CD4-positive, alpha-beta T cell (primary cell): ENCODE measurements at regions of chr7 and their contacts with region 1.

Region 1: GRCh38 chr7:32490127-32490822 is at the start of gene LSM5:
- DNase-seq: peak; percentile 80 to 96 (median 85)
- ATAC-seq: peak; percentile 67
- H3K4me3 ChIP-seq: peak within 1 kb of the TSS; percentile 68
- H3K4me3 Mint-ChIP-seq: peak within 1 kb of the TSS; percentile 92
- H3K27ac ChIP-seq: peak within 1 kb of the TSS; percentile 83 to 84
- H3K27ac Mint-ChIP-seq: peak within 1 kb of the TSS; percentile 92
- H3K4me1 ChIP-seq: peaks cover 16% of the 10 kb centered on the region
- H3K4me1 Mint-ChIP-seq: peaks cover 42% of the 10 kb centered on the region
- H3K27me3 ChIP-seq: no peaks in the 10 kb centered on the region
- H3K27me3 Mint-ChIP-seq: no peaks in the 10 kb centered on the region
- CTCF ChIP-seq: no peak
- total RNA-seq, gene LSM5: 28.2 to 28.7 TPM

Region 2: GRCh38 chr7:32275216-32275979 is 214.9 kb before region 1 on chr7:
- CTCF ChIA-PET with region 1: no interaction called
- POLR2A ChIA-PET with region 1: no interaction called
- intact Hi-C with region 1: no loop called
- DNase-seq: peak in 1 of 14 experiments; percentile 7
- ATAC-seq: no peak
- H3K4me3 ChIP-seq: no peak overlapping the region
- H3K4me3 Mint-ChIP-seq: no peak overlapping the region
- H3K27ac ChIP-seq: no peak overlapping the region
- H3K27ac Mint-ChIP-seq: no peak overlapping the region
- H3K4me1 ChIP-seq: no peaks in the 10 kb centered on the region
- H3K4me1 Mint-ChIP-seq: no peaks in the 10 kb centered on the region
- H3K27me3 ChIP-seq: no peaks in the 10 kb centered on the region
- H3K27me3 Mint-ChIP-seq: no peaks in the 10 kb centered on the region
- CTCF ChIP-seq: no peak

Region 3: DNA sequence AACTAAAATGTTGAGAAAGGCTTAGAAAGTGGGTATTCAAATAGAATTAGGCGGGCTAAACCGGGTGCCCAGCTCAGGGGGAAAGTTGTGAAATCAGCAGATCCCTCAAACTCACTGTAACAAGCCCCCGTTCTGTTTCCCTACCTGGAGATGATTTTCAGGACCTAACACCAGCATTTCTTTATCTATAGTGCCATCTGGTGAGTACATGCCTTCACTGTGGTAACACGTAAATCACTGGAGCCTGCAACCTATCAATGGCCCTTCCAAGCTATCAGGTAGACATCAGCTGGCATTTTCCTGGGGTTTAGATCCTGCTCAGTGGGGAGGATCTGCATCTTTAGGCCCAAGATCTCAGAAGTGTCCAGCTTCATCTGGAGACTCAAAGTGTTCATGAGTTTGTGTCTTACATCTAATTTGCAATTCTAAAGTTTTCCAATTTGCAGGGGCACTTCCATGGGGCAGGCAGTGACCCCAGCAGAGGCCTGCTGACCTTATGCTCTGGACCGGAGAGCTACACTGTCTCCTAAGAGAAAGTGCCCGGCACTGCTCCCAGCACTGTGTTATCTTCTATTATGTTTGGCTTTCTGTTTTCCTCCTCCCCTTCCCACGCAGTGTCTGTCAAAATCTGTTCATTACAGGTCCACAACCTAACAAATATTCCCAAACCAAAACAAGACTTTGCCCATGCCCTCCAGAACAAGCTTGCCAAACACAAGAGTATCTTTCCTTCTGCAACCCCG is 132.6 kb before region 1 on chr7:
- CTCF ChIA-PET with region 1: no interaction called
- POLR2A ChIA-PET with region 1: no interaction called
- intact Hi-C with region 1: no loop called
- DNase-seq: no peak
- ATAC-seq: no peak
- H3K4me3 ChIP-seq: no peak overlapping the region
- H3K4me3 Mint-ChIP-seq: no peak overlapping the region
- H3K27ac ChIP-seq: no peak overlapping the region
- H3K27ac Mint-ChIP-seq: no peak overlapping the region
- H3K4me1 ChIP-seq: no peaks in the 10 kb centered on the region
- H3K4me1 Mint-ChIP-seq: no peaks in the 10 kb centered on the region
- H3K27me3 ChIP-seq: no peaks in the 10 kb centered on the region
- H3K27me3 Mint-ChIP-seq: peaks cover 27% of the 10 kb centered on the region
- CTCF ChIP-seq: no peak

Region 4: DNA sequence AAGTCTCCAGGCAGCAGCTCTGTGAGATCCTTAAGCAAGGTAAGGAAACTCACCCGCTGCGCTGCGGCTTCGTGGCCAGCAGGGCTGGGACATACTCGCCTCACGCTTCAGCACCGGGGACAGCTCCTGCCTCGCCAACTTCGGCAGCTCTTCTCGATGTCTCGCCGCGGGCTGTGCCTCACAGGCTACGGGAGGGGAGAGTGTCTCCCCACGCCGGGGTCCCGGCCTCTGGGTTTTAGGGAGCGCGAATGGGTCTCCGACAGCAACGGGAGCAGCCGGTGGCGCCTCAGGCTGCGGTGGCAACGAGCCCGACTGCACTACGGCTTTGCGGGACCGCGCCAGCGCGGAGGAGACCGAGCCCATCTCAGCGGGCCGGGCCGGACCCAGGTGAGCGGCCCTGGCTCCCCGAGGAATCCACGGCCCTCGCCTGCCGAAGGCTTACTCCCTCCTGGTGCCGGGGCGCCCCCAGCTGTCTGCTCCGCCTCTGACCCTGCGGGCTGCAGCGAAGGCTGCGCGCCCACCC is 62.4 kb before region 1 on chr7:
- CTCF ChIA-PET with region 1: no interaction called
- POLR2A ChIA-PET with region 1: no interaction called
- intact Hi-C with region 1: no loop called
- DNase-seq: peak; percentile 16 to 69 (median 42)
- ATAC-seq: peak; percentile 60
- H3K4me3 ChIP-seq: no peak overlapping the region
- H3K4me3 Mint-ChIP-seq: no peak overlapping the region
- H3K27ac ChIP-seq: no peak overlapping the region
- H3K27ac Mint-ChIP-seq: no peak overlapping the region
- H3K4me1 ChIP-seq: no peaks in the 10 kb centered on the region
- H3K4me1 Mint-ChIP-seq: no peaks in the 10 kb centered on the region
- H3K27me3 ChIP-seq: peaks cover 44 to 52% of the 10 kb centered on the region in 2 experiments
- H3K27me3 Mint-ChIP-seq: peaks cover 67% of the 10 kb centered on the region
- CTCF ChIP-seq: no peak

Region 5: DNA sequence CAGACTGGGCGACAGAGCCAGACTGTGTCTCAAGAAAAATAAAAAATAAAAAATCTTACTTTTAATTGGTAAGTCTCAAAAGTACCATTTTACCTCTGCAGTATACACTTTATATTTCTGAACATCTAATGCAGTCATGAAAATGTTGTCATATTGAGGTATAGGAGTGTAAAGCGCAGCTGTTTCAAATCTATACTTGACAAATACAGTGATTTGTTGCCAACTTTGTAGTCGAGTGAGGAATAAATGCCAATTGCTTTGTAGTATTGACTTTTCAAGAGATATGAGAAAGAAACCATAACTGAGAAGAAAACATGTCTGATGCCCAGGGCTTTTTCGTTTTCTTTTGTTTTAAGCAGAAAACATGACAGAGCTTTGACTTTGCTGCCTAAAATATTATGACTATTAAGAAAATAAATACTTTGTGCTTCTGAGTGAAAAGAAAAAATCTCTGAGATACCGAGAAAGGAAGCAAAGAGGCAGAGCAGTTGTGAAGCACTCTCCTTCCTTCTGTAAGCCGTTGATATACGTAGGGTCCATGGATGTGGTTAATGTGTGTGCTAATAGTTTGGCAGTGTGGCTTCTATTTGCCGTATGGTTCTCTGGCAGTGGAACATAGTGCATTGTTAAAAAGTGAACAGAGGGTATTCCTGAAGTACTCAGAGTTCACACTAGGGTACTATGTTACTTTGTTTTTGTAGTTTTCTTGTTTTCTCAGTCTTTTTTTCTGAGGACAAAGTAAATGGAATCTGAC is 43.2 kb after region 1 on chr7:
- CTCF ChIA-PET with region 1: no interaction called
- POLR2A ChIA-PET with region 1: interaction called, 7 read pairs
- intact Hi-C with region 1: loop called in 1 of 2 experiments (anchors 5 kb)
- DNase-seq: peak in 1 of 14 experiments; percentile 5
- ATAC-seq: no peak
- H3K4me3 ChIP-seq: no peak overlapping the region
- H3K4me3 Mint-ChIP-seq: no peak overlapping the region
- H3K27ac ChIP-seq: no peak overlapping the region
- H3K27ac Mint-ChIP-seq: peak overlapping the region; percentile 72
- H3K4me1 ChIP-seq: no peaks in the 10 kb centered on the region
- H3K4me1 Mint-ChIP-seq: peaks cover 41% of the 10 kb centered on the region
- H3K27me3 ChIP-seq: no peaks in the 10 kb centered on the region
- H3K27me3 Mint-ChIP-seq: no peaks in the 10 kb centered on the region
- CTCF ChIP-seq: no peak

Region 6: DNA sequence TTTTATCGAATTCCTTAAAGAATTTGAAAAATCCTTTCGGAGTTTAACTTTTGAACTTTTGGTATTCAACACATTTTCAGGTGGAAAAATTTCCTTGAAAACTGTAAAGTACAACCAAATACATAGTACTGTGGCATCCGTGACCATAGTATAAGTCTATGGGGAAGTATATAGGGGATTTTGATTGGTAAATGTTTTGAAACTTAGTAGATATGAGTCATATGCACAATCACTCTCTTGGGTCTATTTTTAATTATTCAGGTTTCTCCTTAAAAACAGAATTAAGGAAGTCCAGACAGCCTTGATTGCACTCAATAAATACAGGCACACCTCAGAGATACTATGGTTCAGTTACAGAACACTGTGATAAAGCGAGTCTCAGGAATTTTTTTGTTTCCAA is 69.2 kb after region 1 on chr7:
- CTCF ChIA-PET with region 1: no interaction called
- POLR2A ChIA-PET with region 1: interaction called, 5 read pairs
- intact Hi-C with region 1: loop called (anchors 5 kb)
- DNase-seq: no peak
- ATAC-seq: no peak
- H3K4me3 ChIP-seq: no peak overlapping the region
- H3K4me3 Mint-ChIP-seq: no peak overlapping the region
- H3K27ac ChIP-seq: no peak overlapping the region
- H3K27ac Mint-ChIP-seq: no peak overlapping the region
- H3K4me1 ChIP-seq: no peaks in the 10 kb centered on the region
- H3K4me1 Mint-ChIP-seq: peaks cover 5% of the 10 kb centered on the region
- H3K27me3 ChIP-seq: no peaks in the 10 kb centered on the region
- H3K27me3 Mint-ChIP-seq: no peaks in the 10 kb centered on the region
- CTCF ChIP-seq: no peak

Region 7: DNA sequence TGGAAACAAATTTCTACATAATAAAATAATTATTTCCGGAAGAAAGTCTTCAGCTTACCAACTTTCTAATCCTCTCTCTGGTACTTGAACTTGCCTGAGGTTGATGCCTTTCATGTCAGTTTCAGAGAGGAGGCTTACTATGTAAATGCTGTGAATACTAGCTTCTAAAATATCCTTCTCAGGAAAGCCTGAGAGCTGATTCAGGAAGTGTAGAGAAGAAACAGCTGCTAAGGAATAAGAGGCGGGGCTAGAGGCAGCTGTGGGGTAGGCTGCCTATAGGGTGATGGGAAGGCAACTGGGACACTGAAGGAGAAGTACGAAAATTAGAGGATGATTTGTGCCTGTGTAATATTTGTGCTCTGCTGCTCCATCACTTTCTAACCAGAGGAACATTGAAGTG is 74.3 kb after region 1 on chr7:
- CTCF ChIA-PET with region 1: no interaction called
- POLR2A ChIA-PET with region 1: interaction called, 3 read pairs
- intact Hi-C with region 1: loop called (anchors 5 kb)
- DNase-seq: no peak
- ATAC-seq: no peak
- H3K4me3 ChIP-seq: no peak overlapping the region
- H3K4me3 Mint-ChIP-seq: no peak overlapping the region
- H3K27ac ChIP-seq: no peak overlapping the region
- H3K27ac Mint-ChIP-seq: no peak overlapping the region
- H3K4me1 ChIP-seq: no peaks in the 10 kb centered on the region
- H3K4me1 Mint-ChIP-seq: peaks cover 5% of the 10 kb centered on the region
- H3K27me3 ChIP-seq: no peaks in the 10 kb centered on the region
- H3K27me3 Mint-ChIP-seq: no peaks in the 10 kb centered on the region
- CTCF ChIP-seq: no peak

Region 8: GRCh38 chr7:33062782-33063443 is 572.6 kb after region 1 on chr7:
- CTCF ChIA-PET with region 1: no interaction called
- POLR2A ChIA-PET with region 1: interaction called, 6 read pairs
- intact Hi-C with region 1: loop called in 1 of 2 experiments (anchors 5 kb)
- DNase-seq: peak; percentile 83 to 98 (median 90)
- ATAC-seq: peak; percentile 90
- H3K4me3 ChIP-seq: peak overlapping the region; percentile 72
- H3K4me3 Mint-ChIP-seq: peak overlapping the region; percentile 98
- H3K27ac ChIP-seq: peak overlapping the region; percentile 75 to 89
- H3K27ac Mint-ChIP-seq: peak overlapping the region; percentile 95
- H3K4me1 ChIP-seq: peaks cover 25% of the 10 kb centered on the region
- H3K4me1 Mint-ChIP-seq: peaks cover 48% of the 10 kb centered on the region
- H3K27me3 ChIP-seq: no peaks in the 10 kb centered on the region
- H3K27me3 Mint-ChIP-seq: no peaks in the 10 kb centered on the region
- CTCF ChIP-seq: no peak

Region 9: DNA sequence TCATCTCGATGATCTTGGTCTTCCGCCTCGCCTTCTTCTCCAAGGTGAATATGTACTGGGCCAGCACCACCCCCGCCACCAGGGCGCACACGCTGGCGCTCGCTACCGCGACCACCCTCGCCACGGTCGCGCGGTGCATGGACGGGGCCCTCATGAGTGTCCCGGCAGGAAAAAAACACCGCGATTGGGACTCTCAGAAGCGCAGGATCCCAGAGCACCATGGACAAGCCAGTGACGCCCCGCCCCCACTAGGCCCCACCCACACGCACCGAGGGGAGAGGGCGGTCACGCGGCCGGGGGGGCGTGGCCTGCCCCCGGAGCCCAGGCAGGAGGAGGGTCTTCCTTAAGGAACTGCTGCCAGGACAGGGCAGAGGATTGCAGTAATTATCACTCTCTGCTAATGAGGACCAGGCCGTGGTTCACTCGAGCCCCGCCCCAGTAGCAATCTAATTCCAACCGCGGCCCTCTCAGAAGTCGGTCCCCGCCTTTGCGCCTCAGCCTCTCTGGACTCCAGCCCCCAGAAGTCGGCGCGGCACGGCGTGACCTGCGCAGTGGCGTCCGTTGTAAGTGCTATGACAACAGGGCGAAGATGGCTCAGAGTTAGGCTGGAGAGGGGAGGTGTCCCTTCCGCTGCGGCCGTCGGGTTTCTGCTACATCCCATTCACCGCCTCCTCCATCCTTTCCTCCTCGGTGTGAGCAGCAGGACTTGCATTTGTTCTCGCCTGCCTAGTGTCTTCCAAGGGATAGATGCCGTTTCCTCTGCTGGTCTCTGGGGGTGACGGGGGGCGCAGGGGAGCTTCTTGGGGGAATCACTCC is 638.9 kb after region 1 on chr7 and contains the start of gene BBS9:
- CTCF ChIA-PET with region 1: no interaction called
- POLR2A ChIA-PET with region 1: interaction called, 3 read pairs
- intact Hi-C with region 1: loop called (anchors 2 to 5 kb)
- DNase-seq: peak; percentile 79 to 95 (median 87)
- ATAC-seq: peak; percentile 95
- H3K4me3 ChIP-seq: peak within 1 kb of the TSS; percentile 63
- H3K4me3 Mint-ChIP-seq: peak within 1 kb of the TSS; percentile 96
- H3K27ac ChIP-seq: peak within 1 kb of the TSS; percentile 54 to 79
- H3K27ac Mint-ChIP-seq: peak within 1 kb of the TSS; percentile 92
- H3K4me1 ChIP-seq: peaks cover 4% of the 10 kb centered on the region
- H3K4me1 Mint-ChIP-seq: peaks cover 34% of the 10 kb centered on the region
- H3K27me3 ChIP-seq: no peaks in the 10 kb centered on the region
- H3K27me3 Mint-ChIP-seq: peaks cover 4% of the 10 kb centered on the region
- CTCF ChIP-seq: no peak
- total RNA-seq, gene BBS9: 16.0 to 20.4 TPM

Region 10: DNA sequence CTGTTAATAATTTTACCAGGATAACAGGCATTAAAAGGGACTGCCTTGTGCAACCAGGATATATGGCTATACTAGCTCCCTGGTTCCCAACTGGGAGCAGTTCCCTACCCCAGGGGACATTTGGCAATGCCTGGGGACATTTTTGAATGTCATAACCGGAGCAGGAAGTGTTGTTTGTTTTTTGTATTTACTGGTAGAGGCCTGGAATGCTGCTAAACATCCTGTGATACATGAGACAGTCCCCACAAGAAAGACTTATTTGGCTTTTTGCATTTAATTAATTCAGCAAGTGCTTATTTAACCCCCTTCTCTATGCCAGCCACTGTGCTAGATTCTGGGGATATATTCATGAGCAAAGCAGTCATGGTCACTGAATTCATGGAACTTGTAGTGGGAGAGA is 820.3 kb after region 1 on chr7:
- CTCF ChIA-PET with region 1: no interaction called
- POLR2A ChIA-PET with region 1: no interaction called
- intact Hi-C with region 1: no loop called
- DNase-seq: no peak
- ATAC-seq: no peak
- H3K4me3 ChIP-seq: no peak overlapping the region
- H3K4me3 Mint-ChIP-seq: no peak overlapping the region
- H3K27ac ChIP-seq: no peak overlapping the region
- H3K27ac Mint-ChIP-seq: no peak overlapping the region
- H3K4me1 ChIP-seq: no peaks in the 10 kb centered on the region
- H3K4me1 Mint-ChIP-seq: no peaks in the 10 kb centered on the region
- H3K27me3 ChIP-seq: no peaks in the 10 kb centered on the region
- H3K27me3 Mint-ChIP-seq: no peaks in the 10 kb centered on the region
- CTCF ChIP-seq: no peak